Left ventricle myocardium inferior (tissue), 1 donor: ENCODE measurements at regions of chr3 and their contacts with region 1.

Region 1: DNA sequence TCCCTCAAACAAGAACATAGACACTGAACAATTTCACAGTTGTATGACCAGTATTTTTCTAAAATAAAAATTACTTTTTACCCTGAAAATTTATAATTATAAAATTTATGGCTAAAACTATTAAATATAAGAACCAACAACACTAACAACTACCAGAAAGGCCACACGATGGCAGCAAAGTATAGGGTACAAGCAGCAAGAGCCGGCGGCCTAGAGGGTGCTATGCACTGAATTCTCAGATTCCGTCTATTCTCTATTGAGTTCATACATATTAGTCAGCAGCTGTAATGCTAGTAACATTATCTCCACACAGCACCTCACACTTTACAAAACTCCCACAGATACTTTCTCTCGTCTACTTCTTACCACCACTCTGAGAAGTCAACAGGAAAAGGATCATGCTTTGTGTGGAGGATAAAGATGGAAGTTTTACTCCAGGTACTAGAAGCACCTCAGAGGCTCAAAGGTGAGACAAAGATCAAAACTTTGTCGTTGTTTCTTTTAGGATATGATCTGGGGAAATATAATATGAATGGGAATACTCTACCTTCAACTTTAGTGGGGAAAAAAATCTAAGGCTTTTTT is 160.5 kb downstream of the FGF12 start:
- DNase-seq: peak; percentile 51
- H3K4me3 ChIP-seq: peak overlapping the region; percentile 44
- H3K27ac ChIP-seq: peak overlapping the region; percentile 89
- H3K4me1 ChIP-seq: peaks cover 41% of the 10 kb centered on the region
- H3K27me3 ChIP-seq: no peaks in the 10 kb centered on the region
- CTCF ChIP-seq: peak; percentile 81

Region 2: DNA sequence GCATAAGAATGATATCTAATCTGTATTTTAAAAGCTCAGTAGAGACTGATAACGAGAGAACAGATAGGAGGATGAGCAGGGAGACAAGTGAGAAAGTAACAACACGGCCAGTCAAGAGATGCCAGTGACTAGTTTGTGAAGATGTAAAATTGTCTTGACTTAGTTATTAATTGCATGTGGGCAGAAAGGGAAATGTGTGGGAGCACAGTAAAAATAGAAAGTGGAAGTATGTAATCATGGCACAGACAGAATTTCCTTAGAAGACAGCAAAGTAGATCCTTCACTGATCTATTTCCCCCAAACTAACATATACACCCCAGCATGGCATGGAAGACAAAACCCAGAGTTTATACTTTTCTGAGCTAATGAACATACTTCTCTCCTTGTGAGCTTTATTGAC is 183.9 kb before region 1 on chr3:
- intact Hi-C with region 1: no loop called
- DNase-seq: no peak
- H3K4me3 ChIP-seq: no peak overlapping the region
- H3K27ac ChIP-seq: no peak overlapping the region
- H3K4me1 ChIP-seq: no peaks in the 10 kb centered on the region
- H3K27me3 ChIP-seq: no peaks in the 10 kb centered on the region
- CTCF ChIP-seq: no peak

Region 3: DNA sequence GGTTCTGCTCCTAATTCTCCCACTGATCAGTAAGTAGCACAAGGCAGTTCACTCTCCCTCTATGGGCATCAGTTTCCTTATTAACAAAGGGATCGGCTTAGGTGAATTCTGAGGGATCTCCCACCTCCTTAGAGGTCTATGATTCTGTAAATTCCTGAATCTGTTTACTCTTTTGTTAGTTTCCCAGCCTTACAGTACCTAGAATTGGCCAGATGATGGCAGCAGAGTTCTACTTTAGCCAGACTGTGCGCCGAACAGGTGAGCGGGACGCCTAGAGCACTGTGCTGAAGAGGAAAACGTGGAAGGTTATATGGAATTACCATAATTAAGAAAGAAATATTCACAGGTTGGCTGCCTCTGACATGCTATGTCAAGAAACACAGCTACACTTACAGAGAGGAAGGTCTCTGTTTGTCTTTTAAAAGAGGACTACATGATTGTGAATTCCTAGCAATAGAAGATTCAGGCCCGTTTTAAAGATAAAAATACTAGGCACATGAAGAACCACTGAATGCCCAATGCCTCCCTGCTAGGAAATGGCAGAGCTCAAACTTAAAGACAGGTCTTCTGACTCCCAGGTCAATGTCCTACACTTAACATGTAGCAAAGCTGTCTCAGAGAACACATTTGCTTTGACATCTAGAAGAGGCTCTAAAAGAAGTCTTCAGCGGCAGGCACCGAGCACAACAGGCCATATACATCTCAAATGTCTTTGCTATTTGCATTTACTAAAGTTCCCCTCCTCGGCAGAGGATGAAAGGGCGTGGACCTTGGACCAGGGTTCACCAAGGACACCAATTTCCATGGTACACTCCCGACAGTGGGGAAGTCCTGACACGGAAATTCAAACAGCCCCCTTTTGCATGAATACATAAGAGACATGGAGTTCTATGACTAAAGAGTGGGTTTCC is 99.3 kb before region 1 on chr3:
- intact Hi-C with region 1: loop called (anchors 10 kb)
- DNase-seq: no peak
- H3K4me3 ChIP-seq: no peak overlapping the region
- H3K27ac ChIP-seq: peak overlapping the region; percentile 24
- H3K4me1 ChIP-seq: peaks cover 13% of the 10 kb centered on the region
- H3K27me3 ChIP-seq: no peaks in the 10 kb centered on the region
- CTCF ChIP-seq: peak; percentile 92

Region 4: DNA sequence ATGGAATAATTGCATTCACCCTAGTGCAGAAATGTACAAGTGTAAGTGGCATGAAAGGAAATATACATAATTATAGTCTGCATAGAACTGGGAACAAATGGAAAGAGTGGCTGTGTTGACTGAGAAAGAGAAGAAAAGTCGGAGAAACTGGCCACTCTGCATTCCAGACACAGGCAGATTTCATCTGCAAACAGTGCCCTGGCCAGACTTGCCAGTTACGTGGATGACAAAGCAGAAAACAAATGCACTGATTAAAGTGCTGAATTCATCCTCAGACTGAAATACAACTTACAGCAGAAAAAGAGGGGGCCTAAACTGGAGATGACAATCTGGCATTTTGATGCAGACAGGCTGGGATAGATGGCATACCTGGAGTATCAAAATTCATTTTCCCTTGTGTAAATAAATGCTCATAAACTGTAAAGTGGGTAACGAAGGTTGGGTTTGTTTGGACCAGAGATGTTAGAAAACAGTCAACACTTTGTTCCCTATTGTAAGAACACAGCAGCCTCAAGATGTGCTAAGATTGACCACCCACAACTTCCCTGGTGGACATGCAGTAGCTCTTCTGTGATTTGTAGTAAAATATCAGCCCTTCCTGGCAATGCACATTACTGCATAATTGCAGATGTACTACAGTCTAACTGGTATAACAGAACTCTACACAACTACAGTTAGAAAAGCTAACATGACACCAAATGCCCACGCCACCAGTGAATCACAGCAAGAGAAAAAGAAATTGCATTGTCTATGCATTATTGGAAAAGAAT is 30.9 kb after region 1 on chr3:
- intact Hi-C with region 1: no loop called
- DNase-seq: no peak
- H3K4me3 ChIP-seq: no peak overlapping the region
- H3K27ac ChIP-seq: peak overlapping the region; percentile 63
- H3K4me1 ChIP-seq: peaks cover 41% of the 10 kb centered on the region
- H3K27me3 ChIP-seq: no peaks in the 10 kb centered on the region
- CTCF ChIP-seq: no peak

Region 5: DNA sequence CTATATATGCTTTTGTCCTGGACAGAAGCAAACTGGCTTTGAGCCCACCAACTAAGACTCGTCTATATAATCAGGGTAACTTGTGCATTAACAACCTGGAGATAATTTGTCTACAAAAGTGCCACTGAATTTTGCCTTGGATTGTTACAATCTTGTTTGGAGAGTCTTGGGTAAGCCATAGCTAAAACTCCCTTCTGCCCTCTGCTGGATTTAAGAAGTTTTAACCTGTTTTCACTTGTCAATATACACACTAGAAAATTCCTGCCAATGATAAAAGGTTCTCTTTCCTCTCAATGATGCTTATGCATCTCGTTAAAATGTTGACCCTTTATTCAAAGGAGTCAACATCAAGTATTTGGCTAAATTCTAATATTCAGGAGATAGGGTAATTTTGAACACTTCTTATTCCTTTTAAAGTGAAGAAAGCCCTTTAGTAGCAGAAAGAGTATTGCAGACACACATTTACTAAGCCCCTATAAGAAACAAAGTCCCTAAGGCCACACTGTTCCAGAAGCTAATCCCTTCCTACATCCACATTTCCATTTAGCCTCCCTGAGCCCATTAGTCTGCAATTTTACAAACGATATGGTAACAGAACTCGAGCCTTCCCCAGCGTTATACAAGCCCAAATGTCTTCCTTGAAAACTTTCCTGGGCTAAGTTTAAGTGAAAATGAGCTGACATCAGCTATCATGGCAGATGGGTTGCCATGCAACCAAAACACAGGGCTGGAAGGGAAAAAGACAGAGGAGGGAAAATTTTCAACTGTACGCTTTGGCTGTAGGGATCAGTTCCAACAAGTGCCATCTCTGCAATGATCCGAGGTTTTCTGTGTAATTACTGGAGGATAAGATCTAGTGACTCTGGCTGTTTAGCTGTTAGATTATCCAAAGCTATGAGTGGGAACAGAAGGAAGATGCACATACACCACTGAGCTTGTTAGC is 236.4 kb after region 1 on chr3:
- intact Hi-C with region 1: loop called (anchors 5 kb)
- DNase-seq: no peak
- H3K4me3 ChIP-seq: no peak overlapping the region
- H3K27ac ChIP-seq: no peak overlapping the region
- H3K4me1 ChIP-seq: peaks cover 16% of the 10 kb centered on the region
- H3K27me3 ChIP-seq: no peaks in the 10 kb centered on the region
- CTCF ChIP-seq: peak; percentile 69

Region 6: DNA sequence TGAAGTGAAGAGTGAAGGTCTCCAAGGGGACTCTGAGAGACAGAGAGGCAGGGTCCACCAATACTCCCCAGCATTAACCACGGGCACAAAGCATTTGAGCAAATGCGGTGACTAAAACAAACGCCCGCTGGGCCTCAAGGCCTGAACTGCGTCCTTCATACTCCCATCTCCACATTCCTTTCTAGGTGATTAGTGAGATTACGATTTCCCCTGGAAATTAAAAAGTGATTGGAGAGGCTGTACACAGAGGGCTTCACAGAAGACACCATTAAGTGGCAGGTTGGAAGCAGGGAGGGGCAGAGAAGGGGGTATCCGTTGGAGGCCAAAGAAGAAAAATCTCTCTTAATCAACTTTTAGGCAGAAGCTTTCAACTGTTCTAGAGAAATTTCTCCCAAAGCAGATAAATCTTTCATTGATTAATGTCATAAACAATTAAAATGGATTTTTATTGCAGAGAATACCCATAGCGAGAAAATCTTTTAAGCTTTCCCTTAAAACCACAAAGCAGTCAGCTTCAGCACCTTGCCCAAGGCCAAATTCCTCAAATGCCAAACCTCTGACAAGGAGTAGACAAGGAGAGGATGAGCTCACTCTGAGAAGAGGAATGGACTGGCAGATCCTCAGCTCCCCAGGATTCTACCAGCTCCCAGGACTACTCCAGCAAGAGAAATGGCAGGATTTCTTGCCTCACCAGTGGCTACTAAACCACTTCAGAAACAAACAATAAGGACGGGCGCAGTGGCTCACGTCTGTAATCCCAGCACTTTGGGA is 312.7 kb after region 1 on chr3:
- intact Hi-C with region 1: no loop called
- DNase-seq: no peak
- H3K4me3 ChIP-seq: no peak overlapping the region
- H3K27ac ChIP-seq: no peak overlapping the region
- H3K4me1 ChIP-seq: peaks cover 10% of the 10 kb centered on the region
- H3K27me3 ChIP-seq: no peaks in the 10 kb centered on the region
- CTCF ChIP-seq: no peak